Activated CD8-positive, alpha-beta T cell treated with anti-CD3 and anti-CD28 coated beads, Interleukin-2, amount 10 ng/mL, durations not matched to agents 7 days and 5 days (primary cell): ENCODE measurements at regions of chr5 and their contacts with region 1.

Region 1: GRCh38 chr5:39224196-39224761 is 4.9 kb upstream of the FYB1 start:
- DNase-seq: no peak
- ATAC-seq: no peak
- H3K4me3 Mint-ChIP-seq: no peak overlapping the region
- H3K27ac Mint-ChIP-seq: no peak overlapping the region
- H3K4me1 Mint-ChIP-seq: peaks cover 12% of the 10 kb centered on the region
- H3K27me3 Mint-ChIP-seq: no peaks in the 10 kb centered on the region

Region 2: GRCh38 chr5:39264528-39264927 is 40.2 kb after region 1 on chr5:
- CTCF ChIA-PET with region 1: interaction called, 51 read pairs
- POLR2A ChIA-PET with region 1: no interaction called
- DNase-seq: peak; percentile 61
- ATAC-seq: peak; percentile 90
- H3K4me3 Mint-ChIP-seq: peak overlapping the region; percentile 22
- H3K27ac Mint-ChIP-seq: peak overlapping the region; percentile 76
- H3K4me1 Mint-ChIP-seq: peaks cover 36% of the 10 kb centered on the region
- H3K27me3 Mint-ChIP-seq: no peaks in the 10 kb centered on the region